ENCODE measurements at regions of chr2 and their contacts with region 1.

Region 1: GRCh38 chr2:32379352-32379751 is 22.5 kb downstream of the BIRC6 start:
- DNase-seq: no peak
- H3K4me3 ChIP-seq: no peak overlapping the region
- H3K27ac ChIP-seq: no peak overlapping the region
- H3K4me1 ChIP-seq: no peaks in the 10 kb centered on the region
- CTCF ChIP-seq: no peak

Region 2: DNA sequence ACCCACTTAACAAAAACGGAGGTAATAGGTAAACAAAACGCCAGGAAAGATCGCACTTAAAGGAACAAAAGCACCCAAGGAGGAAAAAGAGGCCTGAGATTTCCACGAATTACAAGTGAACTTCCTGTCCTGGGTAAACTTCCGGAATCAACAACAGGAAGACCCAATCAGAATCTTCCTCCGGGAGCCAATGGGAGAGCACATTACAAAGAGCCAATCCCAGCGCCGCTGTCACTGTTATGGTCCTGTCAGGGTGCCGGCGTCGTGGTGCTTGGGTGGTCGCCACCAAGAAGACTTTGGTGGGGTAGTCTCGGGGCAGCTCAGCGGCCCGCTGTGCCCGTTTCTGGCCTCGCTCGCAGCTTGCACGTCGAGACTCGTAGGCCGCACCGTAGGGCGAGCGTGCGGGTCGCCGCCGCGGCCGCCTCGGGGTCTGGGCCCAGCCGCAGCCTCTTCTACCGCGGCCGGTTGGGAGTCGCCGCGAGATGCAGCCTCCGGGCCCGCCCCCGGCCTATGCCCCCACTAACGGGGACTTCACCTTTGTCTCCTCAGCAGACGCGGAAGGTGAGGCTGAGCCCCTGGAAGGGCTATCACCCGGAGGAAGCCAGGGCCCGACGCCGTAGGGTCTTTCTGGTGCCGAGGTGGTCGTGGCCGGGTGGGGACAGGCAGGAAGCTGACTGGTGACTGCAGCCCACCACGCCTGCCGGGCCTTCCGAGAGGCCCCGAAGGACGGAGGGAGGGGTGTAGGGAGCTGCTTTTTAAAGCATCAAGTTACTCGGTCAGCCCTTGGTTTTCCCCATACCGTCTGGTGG is 101.5 kb before region 1 on chr2 and contains the start of gene YIPF4:
- CTCF ChIA-PET with region 1: no interaction called
- POLR2A ChIA-PET with region 1: no interaction called
- intact Hi-C with region 1: no loop called
- DNase-seq: peak; percentile 94
- H3K4me3 ChIP-seq: peak within 1 kb of the TSS; percentile 93
- H3K27ac ChIP-seq: peak within 1 kb of the TSS; percentile 16
- H3K4me1 ChIP-seq: peaks cover 14% of the 10 kb centered on the region
- CTCF ChIP-seq: no peak
- total RNA-seq, gene YIPF4: 5.4 and 8.6 TPM in 2 replicates

Region 3: GRCh38 chr2:32369222-32369621 is 10.1 kb before region 1 on chr2:
- CTCF ChIA-PET with region 1: no interaction called
- POLR2A ChIA-PET with region 1: interaction called, 17 read pairs
- intact Hi-C with region 1: no loop called
- DNase-seq: no peak
- H3K4me3 ChIP-seq: no peak overlapping the region
- H3K27ac ChIP-seq: no peak overlapping the region
- H3K4me1 ChIP-seq: no peaks in the 10 kb centered on the region
- CTCF ChIP-seq: no peak

Region 4: GRCh38 chr2:33275689-33276444 is 896.5 kb after region 1 on chr2:
- CTCF ChIA-PET with region 1: no interaction called
- POLR2A ChIA-PET with region 1: no interaction called
- intact Hi-C with region 1: no loop called
- DNase-seq: no peak
- H3K4me3 ChIP-seq: no peak overlapping the region
- H3K27ac ChIP-seq: no peak overlapping the region
- H3K4me1 ChIP-seq: peaks cover 26% of the 10 kb centered on the region
- CTCF ChIP-seq: no peak

Measured in OCI-LY7 (cell line).